ENCODE measurements at regions of chr20 and their contacts with region 1.

Region 1: DNA sequence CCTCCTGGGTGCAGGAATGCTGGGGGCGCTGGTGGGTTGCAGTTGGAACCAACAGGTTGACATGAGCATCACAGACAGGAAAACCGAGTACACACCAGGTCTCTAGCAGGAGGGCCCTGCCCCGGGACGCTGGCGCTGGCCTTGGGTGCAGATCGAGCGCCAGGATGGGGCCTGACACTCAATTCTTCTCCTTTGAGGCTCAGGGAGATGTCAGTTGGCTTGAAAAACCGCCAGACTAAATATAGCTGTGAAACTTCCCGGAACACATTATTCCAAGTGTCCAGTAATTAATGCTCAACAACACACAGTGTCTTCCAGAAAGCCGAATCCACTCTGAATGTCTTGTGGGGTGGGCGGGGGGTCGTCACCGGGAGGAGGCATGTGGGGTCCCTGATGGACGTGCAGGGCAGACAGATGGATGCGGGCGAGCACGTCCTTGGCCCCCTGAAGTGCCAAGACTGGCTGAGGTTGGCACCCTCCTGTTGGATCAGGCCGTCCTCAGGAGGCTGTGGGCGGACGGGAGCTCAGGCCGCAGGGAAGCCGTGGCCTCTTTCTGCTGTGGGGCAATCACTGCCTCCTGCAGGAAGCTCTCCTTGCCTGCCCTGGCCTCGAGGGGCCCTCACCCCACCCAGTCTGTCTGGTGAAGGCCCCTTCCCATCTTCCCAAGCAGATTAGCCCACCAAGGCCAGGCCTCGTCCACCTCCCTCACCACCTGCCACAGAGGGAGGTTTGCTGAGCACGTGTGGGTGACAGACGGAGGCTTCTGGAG is 19.4 kb upstream of the GATA5 start:
- DNase-seq: no peak
- ATAC-seq: no peak
- H3K4me3 Mint-ChIP-seq: peak overlapping the region; percentile 44
- H3K27ac Mint-ChIP-seq: peak overlapping the region; percentile 59
- H3K4me1 Mint-ChIP-seq: peaks cover 24% of the 10 kb centered on the region
- H3K27me3 Mint-ChIP-seq: peaks cover 9% of the 10 kb centered on the region
- CTCF ChIP-seq: no peak

Region 2: DNA sequence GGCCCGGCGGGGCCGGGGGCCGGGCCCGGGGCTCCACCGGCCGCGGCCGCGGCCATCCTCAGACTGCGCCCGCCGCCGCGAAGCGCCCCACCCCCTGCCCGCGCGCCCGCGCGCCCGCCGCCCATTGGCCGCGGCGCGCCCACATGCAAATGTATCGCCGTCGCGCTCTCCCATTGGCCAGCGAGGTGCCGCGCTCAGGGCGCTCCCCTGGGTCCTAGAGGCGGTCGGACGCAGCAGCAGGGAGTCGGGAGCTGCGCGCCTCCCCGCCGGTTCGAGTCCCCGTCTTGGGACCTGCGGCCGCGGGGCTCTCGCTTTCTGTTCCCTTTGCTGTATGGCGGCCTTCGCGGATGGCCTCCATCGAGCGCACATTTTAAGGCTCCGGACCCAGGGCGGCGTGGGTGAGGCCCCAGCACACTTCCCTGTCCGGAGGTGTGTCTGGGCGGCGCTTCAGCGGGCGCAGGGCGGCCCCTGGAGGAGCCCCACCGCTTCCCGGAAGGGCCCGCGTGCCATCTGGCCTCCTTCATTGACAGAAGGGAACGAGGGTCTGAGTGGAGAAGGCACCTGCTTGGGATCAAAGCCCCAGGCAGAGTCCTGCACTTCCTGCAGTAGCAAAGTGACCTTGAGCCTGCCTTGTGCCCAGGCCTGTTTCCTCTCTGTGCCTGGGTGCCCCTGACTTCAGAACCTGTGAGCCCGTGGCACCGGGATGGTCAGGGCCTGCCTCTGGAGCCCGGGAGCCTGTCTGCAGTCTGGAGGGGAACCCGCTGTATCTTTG is 87.8 kb before region 1 on chr20 and contains the start of gene CABLES2:
- CTCF ChIA-PET with region 1: no interaction called
- POLR2A ChIA-PET with region 1: no interaction called
- intact Hi-C with region 1: loop called (anchors 2 kb)
- DNase-seq: peak; percentile 90
- ATAC-seq: peak; percentile 90
- H3K4me3 Mint-ChIP-seq: peak within 1 kb of the TSS; percentile 88
- H3K27ac Mint-ChIP-seq: peak within 1 kb of the TSS; percentile 86
- H3K4me1 Mint-ChIP-seq: peaks cover 36% of the 10 kb centered on the region
- H3K27me3 Mint-ChIP-seq: no peaks in the 10 kb centered on the region
- CTCF ChIP-seq: no peak
- total RNA-seq, gene CABLES2: 6.6 and 7.0 TPM in 2 replicates

Region 3: GRCh38 chr20:62668441-62669027 is 173.4 kb after region 1 on chr20:
- CTCF ChIA-PET with region 1: no interaction called
- POLR2A ChIA-PET with region 1: no interaction called
- intact Hi-C with region 1: no loop called
- DNase-seq: no peak
- ATAC-seq: peak; percentile 45
- H3K4me3 Mint-ChIP-seq: no peak overlapping the region
- H3K27ac Mint-ChIP-seq: no peak overlapping the region
- H3K4me1 Mint-ChIP-seq: no peaks in the 10 kb centered on the region
- H3K27me3 Mint-ChIP-seq: no peaks in the 10 kb centered on the region
- CTCF ChIP-seq: no peak

Measured in activated B cell treated with CpG ODN at 0.5 μM for 24 hours (primary cell).